CD4-positive, alpha-beta memory T cell (primary cell): ENCODE measurements at regions of chr11 and their contacts with region 1.

Region 1: GRCh38 chr11:9460322-9461067 is at the start of gene ZNF143:
- DNase-seq: peak; percentile 99 to 100 (median 100)
- H3K4me3 ChIP-seq: peak within 1 kb of the TSS; percentile 88 to 96
- H3K4me3 Mint-ChIP-seq: peak within 1 kb of the TSS; percentile 93 to 98 (median 97)
- H3K27ac ChIP-seq: peak within 1 kb of the TSS; percentile 97
- H3K27ac Mint-ChIP-seq: peak within 1 kb of the TSS; percentile 98 to 100 (median 99)
- H3K4me1 ChIP-seq: peaks cover 33% of the 10 kb centered on the region
- H3K4me1 Mint-ChIP-seq: peaks cover 16 to 43% (median 26%) of the 10 kb centered on the region in 4 donors
- H3K27me3 ChIP-seq: no peaks in the 10 kb centered on the region
- H3K27me3 Mint-ChIP-seq: no peaks in the 10 kb centered on the region
- total RNA-seq, gene ZNF143: 50.5 to 51.1 TPM

Region 2: GRCh38 chr11:8911029-8911826 is 549.3 kb before region 1 on chr11 and contains the start of gene AKIP1:
- CTCF ChIA-PET with region 1: interaction called, 3 read pairs
- POLR2A ChIA-PET with region 1: interaction called, 12 read pairs
- intact Hi-C with region 1: loop called (anchors 2 kb)
- DNase-seq: peak; percentile 63 to 78 (median 65)
- H3K4me3 ChIP-seq: peak within 1 kb of the TSS; percentile 76 to 79
- H3K4me3 Mint-ChIP-seq: peak within 1 kb of the TSS; percentile 91 to 97 (median 92)
- H3K27ac ChIP-seq: peak within 1 kb of the TSS; percentile 52
- H3K27ac Mint-ChIP-seq: peak within 1 kb of the TSS; percentile 57 to 94 (median 89)
- H3K4me1 ChIP-seq: peaks cover 38% of the 10 kb centered on the region
- H3K4me1 Mint-ChIP-seq: peaks cover 27 to 60% (median 41%) of the 10 kb centered on the region in 4 donors
- H3K27me3 ChIP-seq: no peaks in the 10 kb centered on the region
- H3K27me3 Mint-ChIP-seq: no peaks in the 10 kb centered on the region
- total RNA-seq, gene AKIP1: 13.3 to 14.5 TPM

Region 3: DNA sequence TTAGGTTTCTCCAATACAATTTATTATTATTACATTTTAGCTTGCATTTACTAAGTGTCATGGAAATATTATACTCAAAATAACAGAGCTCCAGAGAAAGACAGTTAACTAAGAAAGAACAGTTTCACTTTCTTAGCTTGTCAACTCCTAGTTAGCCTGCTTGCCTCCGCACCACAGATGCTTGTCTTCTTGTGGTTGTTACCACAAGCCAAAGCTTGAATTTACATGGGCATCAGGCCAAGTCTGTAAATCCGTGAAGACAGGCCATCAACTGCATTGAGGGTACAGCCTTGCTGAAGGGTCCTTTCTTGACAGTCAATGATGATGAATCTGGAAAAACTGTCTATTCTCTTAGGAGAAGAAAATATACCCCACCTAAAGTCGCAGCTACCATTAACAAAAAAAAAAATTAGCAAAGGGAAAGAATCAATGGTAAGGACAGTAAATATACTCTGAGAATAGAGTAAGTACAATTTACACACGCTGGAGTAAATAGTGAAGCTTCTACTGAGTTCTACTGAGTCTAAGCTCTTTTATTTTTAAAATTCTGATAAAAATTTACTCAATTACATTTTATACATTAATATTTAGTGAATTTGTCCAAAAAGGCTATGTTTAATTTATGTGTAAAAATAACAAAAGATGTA is 179.7 kb before region 1 on chr11:
- CTCF ChIA-PET with region 1: interaction called, 3 read pairs
- POLR2A ChIA-PET with region 1: interaction called, 11 read pairs
- intact Hi-C with region 1: no loop called
- DNase-seq: peak; percentile 61 to 73 (median 68)
- H3K4me3 ChIP-seq: no peak overlapping the region
- H3K4me3 Mint-ChIP-seq: peak overlapping the region; percentile 43 to 72 (median 58)
- H3K27ac ChIP-seq: no peak overlapping the region
- H3K27ac Mint-ChIP-seq: peak overlapping the region; percentile 3 to 63 (median 36)
- H3K4me1 ChIP-seq: peaks cover 17% of the 10 kb centered on the region
- H3K4me1 Mint-ChIP-seq: peaks cover 9 to 19% (median 14%) of the 10 kb centered on the region in 4 donors
- H3K27me3 ChIP-seq: no peaks in the 10 kb centered on the region
- H3K27me3 Mint-ChIP-seq: no peaks in the 10 kb centered on the region

Region 4: GRCh38 chr11:9384535-9385303 is 75.8 kb before region 1 on chr11 and contains the start of gene IPO7:
- CTCF ChIA-PET with region 1: interaction called, 3 read pairs
- POLR2A ChIA-PET with region 1: interaction called, 52 read pairs
- intact Hi-C with region 1: loop called (anchors 1 kb)
- DNase-seq: peak; percentile 84 to 89 (median 86)
- H3K4me3 ChIP-seq: peak within 1 kb of the TSS; percentile 92 to 97
- H3K4me3 Mint-ChIP-seq: peak within 1 kb of the TSS; percentile 92 to 98 (median 94)
- H3K27ac ChIP-seq: peak within 1 kb of the TSS; percentile 86
- H3K27ac Mint-ChIP-seq: peak within 1 kb of the TSS; percentile 92 to 96 (median 94)
- H3K4me1 ChIP-seq: peaks cover 29% of the 10 kb centered on the region
- H3K4me1 Mint-ChIP-seq: peaks cover 23 to 43% (median 34%) of the 10 kb centered on the region in 4 donors
- H3K27me3 ChIP-seq: no peaks in the 10 kb centered on the region
- H3K27me3 Mint-ChIP-seq: no peaks in the 10 kb centered on the region
- total RNA-seq, gene IPO7: 63.4 to 67.0 TPM

Region 5: DNA sequence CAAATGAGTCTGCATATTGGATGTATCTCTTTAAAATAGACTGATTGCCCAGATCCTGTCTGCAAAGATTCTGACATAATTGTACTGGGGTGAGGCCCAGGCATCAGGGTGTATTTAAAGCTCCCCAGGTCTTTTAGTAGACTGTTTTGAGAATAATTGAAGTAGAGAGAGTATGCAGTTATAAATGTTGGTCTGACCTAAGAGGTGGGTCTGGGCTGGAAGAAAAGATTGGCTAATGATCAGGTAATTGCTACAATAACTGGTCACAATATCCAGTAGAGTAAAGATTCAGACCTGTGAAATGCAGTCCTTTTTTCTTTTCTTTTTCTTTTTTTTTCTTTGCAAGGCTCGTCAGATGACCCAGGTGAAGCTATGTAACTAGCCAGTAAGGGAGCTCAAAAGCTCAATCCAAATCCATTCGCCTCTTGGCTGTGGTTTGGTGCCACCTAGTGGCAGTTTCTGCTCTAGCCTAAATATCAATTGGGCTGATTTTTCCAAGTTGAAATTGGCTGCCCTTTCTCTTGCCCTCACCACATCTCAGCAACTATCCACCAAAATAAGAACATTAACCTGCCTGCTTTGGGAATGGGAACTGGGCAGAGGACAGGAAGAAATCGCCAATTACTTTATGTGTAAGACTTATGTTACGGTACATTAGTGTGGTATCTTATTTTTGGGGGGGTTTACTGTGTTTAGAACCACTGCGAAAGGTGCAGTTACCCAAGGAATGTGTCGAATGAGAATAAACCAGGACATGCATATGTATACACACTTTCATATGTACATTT is 46.2 kb after region 1 on chr11:
- CTCF ChIA-PET with region 1: interaction called, 12 read pairs
- POLR2A ChIA-PET with region 1: interaction called, 11 read pairs
- intact Hi-C with region 1: no loop called
- DNase-seq: peak; percentile 63 to 68 (median 65)
- H3K4me3 ChIP-seq: no peak overlapping the region
- H3K4me3 Mint-ChIP-seq: no peak overlapping the region
- H3K27ac ChIP-seq: no peak overlapping the region
- H3K27ac Mint-ChIP-seq: peak overlapping the region in 3 of 7 donors; percentile 62 to 73 (median 67)
- H3K4me1 ChIP-seq: peaks cover 10% of the 10 kb centered on the region
- H3K4me1 Mint-ChIP-seq: peaks cover 9 to 18% (median 12%) of the 10 kb centered on the region in 4 donors
- H3K27me3 ChIP-seq: no peaks in the 10 kb centered on the region
- H3K27me3 Mint-ChIP-seq: no peaks in the 10 kb centered on the region

Region 6: DNA sequence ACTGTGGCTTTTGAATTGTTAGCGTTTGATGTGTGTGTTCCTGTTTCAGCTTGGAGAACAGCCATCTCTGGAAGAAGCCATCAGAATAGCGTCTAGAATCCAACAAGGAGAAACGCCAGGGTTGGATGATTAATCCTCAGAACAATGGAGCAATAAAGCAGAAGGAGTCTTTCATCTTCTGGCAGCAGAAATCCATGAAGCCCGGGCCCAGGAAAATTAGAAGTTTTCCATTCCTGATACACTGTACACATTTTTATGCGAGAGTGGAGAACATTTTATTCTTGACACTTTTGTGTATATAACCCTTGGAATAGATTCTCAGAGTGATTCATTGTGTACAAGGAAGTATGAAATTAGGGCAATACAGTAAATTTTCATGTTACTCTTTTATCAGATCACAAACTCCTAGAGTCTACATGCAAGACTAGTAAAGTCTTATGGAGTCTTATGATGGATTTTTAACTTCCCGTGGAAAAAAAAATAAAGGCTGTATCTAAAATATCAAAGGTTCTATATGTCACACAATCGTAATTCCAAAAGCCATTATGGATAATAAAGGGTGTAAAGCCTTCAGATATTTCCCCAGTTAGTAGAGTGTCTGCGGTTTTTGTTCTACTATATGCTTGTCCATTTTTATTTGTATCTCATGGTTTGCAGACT is 67.1 kb after region 1 on chr11:
- CTCF ChIA-PET with region 1: no interaction called
- POLR2A ChIA-PET with region 1: no interaction called
- intact Hi-C with region 1: no loop called
- DNase-seq: no peak
- H3K4me3 ChIP-seq: no peak overlapping the region
- H3K4me3 Mint-ChIP-seq: no peak overlapping the region
- H3K27ac ChIP-seq: no peak overlapping the region
- H3K27ac Mint-ChIP-seq: peak overlapping the region in 1 of 7 donors; percentile 15
- H3K4me1 ChIP-seq: no peaks in the 10 kb centered on the region
- H3K4me1 Mint-ChIP-seq: peaks cover 0 to 4% (median 0%) of the 10 kb centered on the region in 4 donors
- H3K27me3 ChIP-seq: no peaks in the 10 kb centered on the region
- H3K27me3 Mint-ChIP-seq: no peaks in the 10 kb centered on the region

Region 7: GRCh38 chr11:9757809-9758636 is 297.5 kb after region 1 on chr11:
- CTCF ChIA-PET with region 1: no interaction called
- POLR2A ChIA-PET with region 1: no interaction called
- intact Hi-C with region 1: loop called (anchors 2 kb)
- DNase-seq: peak; percentile 90 to 93 (median 90)
- H3K4me3 ChIP-seq: peak overlapping the region; percentile 44 to 75
- H3K4me3 Mint-ChIP-seq: peak overlapping the region; percentile 76 to 89 (median 84)
- H3K27ac ChIP-seq: peak overlapping the region; percentile 60
- H3K27ac Mint-ChIP-seq: peak overlapping the region; percentile 85 to 91 (median 89)
- H3K4me1 ChIP-seq: peaks cover 16% of the 10 kb centered on the region
- H3K4me1 Mint-ChIP-seq: peaks cover 10 to 25% (median 17%) of the 10 kb centered on the region in 4 donors
- H3K27me3 ChIP-seq: no peaks in the 10 kb centered on the region
- H3K27me3 Mint-ChIP-seq: no peaks in the 10 kb centered on the region